ENCODE measurements at regions of chr14 and their contacts with region 1.

Region 1: GRCh38 chr14:73026845-73027542 is at the start of gene ZFYVE1:
- DNase-seq: peak; percentile 100
- ATAC-seq: peak; percentile 99
- H3K4me3 ChIP-seq: peak within 1 kb of the TSS; percentile 81
- H3K27ac ChIP-seq: no peak within 1 kb of the TSS
- H3K4me1 ChIP-seq: peaks cover 18% of the 10 kb centered on the region
- H3K27me3 ChIP-seq: no peaks in the 10 kb centered on the region
- CTCF ChIP-seq: no peak
- total RNA-seq, gene ZFYVE1: 10.5 and 13.0 TPM in 2 replicates

Region 2: DNA sequence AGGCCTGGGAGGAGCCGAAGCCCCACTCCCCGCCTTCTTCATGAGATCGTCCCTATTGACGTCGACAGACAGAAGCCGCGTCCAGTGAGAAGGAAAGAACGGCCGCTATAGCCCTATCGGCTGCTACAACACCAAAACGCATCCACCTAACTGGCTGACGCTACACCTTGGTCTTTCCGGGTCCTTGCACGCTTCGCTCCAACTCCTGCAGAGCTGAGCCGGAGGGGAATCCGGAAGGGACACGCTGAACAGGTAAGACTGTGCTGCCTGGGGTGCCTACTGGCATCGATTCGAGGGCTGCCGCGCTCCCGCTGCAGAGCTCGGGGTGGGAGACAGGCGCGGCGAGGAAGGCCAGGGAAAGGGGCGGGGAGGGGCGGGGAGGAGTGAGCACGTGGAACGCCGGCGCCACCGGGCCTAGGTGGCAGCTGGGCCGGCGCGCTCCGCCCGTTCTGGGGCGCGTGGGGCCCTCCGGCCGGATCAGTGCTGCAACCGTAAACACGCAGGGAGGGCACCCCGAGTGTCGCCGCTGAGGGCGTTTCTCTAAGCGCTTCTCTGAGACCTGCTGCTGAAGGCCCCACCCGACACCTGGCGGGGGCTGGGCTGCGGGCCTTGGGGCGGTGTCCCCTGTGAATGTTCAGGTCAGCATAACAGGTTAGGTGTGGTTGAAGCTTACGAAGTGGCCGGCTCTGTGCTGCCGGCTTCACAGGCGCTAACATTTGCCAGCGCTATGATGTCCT is 100.5 kb before region 1 on chr14 and contains the start of gene DCAF4:
- CTCF ChIA-PET with region 1: no interaction called
- POLR2A ChIA-PET with region 1: no interaction called
- intact Hi-C with region 1: loop called (anchors 1 kb)
- DNase-seq: peak; percentile 99
- ATAC-seq: peak; percentile 96
- H3K4me3 ChIP-seq: peak within 1 kb of the TSS; percentile 77
- H3K27ac ChIP-seq: peak within 1 kb of the TSS; percentile 63
- H3K4me1 ChIP-seq: peaks cover 12% of the 10 kb centered on the region
- H3K27me3 ChIP-seq: no peaks in the 10 kb centered on the region
- CTCF ChIP-seq: no peak
- total RNA-seq, gene DCAF4: 55.8 and 56.8 TPM in 2 replicates

Region 3: GRCh38 chr14:72962829-72963312 is 64.1 kb before region 1 on chr14:
- CTCF ChIA-PET with region 1: interaction called, 3 read pairs
- POLR2A ChIA-PET with region 1: no interaction called
- intact Hi-C with region 1: loop called (anchors 2 kb)
- DNase-seq: peak; percentile 91
- ATAC-seq: peak; percentile 40
- H3K4me3 ChIP-seq: no peak overlapping the region
- H3K27ac ChIP-seq: peak overlapping the region; percentile 69; the same call in 1 of the 2 replicates
- H3K4me1 ChIP-seq: peaks cover 28% of the 10 kb centered on the region
- H3K27me3 ChIP-seq: no peaks in the 10 kb centered on the region
- CTCF ChIP-seq: no peak

Region 4: DNA sequence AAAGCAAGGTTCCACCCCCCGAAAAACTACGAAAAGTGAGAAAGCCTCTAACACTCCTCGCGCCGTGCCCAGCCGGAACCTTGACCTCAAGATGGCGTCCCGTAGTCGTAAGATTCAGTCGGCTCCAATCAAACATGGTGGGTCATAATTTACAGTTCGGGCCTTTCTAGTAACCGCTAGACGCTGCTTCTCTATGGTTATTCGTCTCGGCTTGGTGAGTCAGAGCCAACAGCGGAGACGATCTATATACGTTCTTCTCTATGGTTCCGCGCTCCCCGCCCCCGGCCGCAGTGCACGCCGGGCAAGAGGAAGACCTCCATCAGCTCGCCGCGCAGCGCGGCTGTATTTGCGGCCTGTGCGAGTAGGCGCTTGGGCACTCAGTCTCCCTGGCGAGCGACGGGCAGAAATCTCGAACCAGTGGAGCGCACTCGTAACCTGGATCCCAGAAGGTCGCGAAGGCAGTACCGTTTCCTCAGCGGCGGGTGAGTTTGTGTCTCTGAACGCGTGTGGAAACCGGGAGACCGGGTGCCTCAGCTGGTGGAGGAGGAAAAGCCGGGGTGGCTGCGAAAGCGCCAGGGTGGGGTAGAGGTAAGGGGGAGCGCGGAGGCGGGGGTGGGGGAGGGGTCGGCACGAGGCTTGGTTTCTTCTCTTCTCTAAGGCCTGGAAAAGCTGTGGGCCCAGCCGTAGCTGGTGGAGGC is 31.4 kb after region 1 on chr14 and contains the start of gene RBM25:
- CTCF ChIA-PET with region 1: interaction called, 8 read pairs
- POLR2A ChIA-PET with region 1: interaction called, 30 read pairs
- intact Hi-C with region 1: loop called (anchors 1 kb)
- DNase-seq: peak; percentile 99
- ATAC-seq: peak; percentile 94
- H3K4me3 ChIP-seq: peak within 1 kb of the TSS; percentile 86
- H3K27ac ChIP-seq: peak within 1 kb of the TSS; percentile 78
- H3K4me1 ChIP-seq: peaks cover 22% of the 10 kb centered on the region
- H3K27me3 ChIP-seq: no peaks in the 10 kb centered on the region
- CTCF ChIP-seq: no peak; the same call in 1 of the 2 replicates
- total RNA-seq, gene RBM25: 53.2 and 64.7 TPM in 2 replicates

Region 5: GRCh38 chr14:73091852-73092251 is 64.9 kb after region 1 on chr14:
- CTCF ChIA-PET with region 1: no interaction called
- POLR2A ChIA-PET with region 1: interaction called, 13 read pairs
- intact Hi-C with region 1: no loop called
- DNase-seq: peak; percentile 89
- ATAC-seq: peak; percentile 82
- H3K4me3 ChIP-seq: no peak overlapping the region
- H3K27ac ChIP-seq: no peak overlapping the region; the same call in 1 of the 2 replicates
- H3K4me1 ChIP-seq: peaks cover 6% of the 10 kb centered on the region
- H3K27me3 ChIP-seq: no peaks in the 10 kb centered on the region
- CTCF ChIP-seq: no peak

Measured in PC-3 (cell line).